PC-3 (cell line): ENCODE measurements at regions of chr2 and their contacts with region 1.

Region 1: GRCh38 chr2:15142069-15142873 is 418.9 kb downstream of the NBAS start:
- DNase-seq: peak; percentile 88
- ATAC-seq: peak; percentile 50
- H3K4me3 ChIP-seq: peak overlapping the region; percentile 1; the same call in 1 of the 2 replicates
- H3K27ac ChIP-seq: peak overlapping the region; percentile 80
- H3K4me1 ChIP-seq: peaks cover 38% of the 10 kb centered on the region
- H3K27me3 ChIP-seq: no peaks in the 10 kb centered on the region
- CTCF ChIP-seq: no peak

Region 2: GRCh38 chr2:15031745-15032240 is 110.5 kb before region 1 on chr2:
- CTCF ChIA-PET with region 1: no interaction called
- POLR2A ChIA-PET with region 1: no interaction called
- intact Hi-C with region 1: loop called (anchors 10 kb)
- DNase-seq: peak; percentile 28
- ATAC-seq: peak; percentile 35; the same call in 1 of the 2 replicates
- H3K4me3 ChIP-seq: no peak overlapping the region
- H3K27ac ChIP-seq: no peak overlapping the region
- H3K4me1 ChIP-seq: peaks cover 8% of the 10 kb centered on the region
- H3K27me3 ChIP-seq: no peaks in the 10 kb centered on the region
- CTCF ChIP-seq: peak; percentile 35

Region 3: DNA sequence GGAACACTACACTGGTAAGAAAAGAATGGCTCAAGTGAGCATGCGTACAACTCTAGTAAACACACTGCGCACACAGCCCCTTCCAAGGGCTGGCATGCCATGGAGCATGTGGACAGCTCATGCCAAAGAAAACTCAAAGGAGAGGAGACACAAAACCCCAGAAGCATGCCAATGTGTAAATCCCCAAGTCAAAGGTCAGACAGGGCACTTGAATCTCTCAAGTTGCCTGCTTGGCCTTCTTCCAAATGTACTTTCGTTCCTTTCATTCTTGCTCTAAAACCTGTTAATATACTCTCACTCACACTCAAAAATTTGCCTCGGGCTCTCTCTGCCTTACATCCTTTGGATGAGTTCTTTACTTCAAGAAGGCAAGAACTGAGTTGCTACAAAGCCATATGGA is 53.5 kb after region 1 on chr2:
- CTCF ChIA-PET with region 1: no interaction called
- POLR2A ChIA-PET with region 1: no interaction called
- intact Hi-C with region 1: no loop called
- DNase-seq: peak; percentile 42
- ATAC-seq: no peak
- H3K4me3 ChIP-seq: no peak overlapping the region
- H3K27ac ChIP-seq: no peak overlapping the region
- H3K4me1 ChIP-seq: peaks cover 35% of the 10 kb centered on the region
- H3K27me3 ChIP-seq: no peaks in the 10 kb centered on the region
- CTCF ChIP-seq: no peak